ENCODE measurements at regions of chr4 and their contacts with region 1.

Region 1: DNA sequence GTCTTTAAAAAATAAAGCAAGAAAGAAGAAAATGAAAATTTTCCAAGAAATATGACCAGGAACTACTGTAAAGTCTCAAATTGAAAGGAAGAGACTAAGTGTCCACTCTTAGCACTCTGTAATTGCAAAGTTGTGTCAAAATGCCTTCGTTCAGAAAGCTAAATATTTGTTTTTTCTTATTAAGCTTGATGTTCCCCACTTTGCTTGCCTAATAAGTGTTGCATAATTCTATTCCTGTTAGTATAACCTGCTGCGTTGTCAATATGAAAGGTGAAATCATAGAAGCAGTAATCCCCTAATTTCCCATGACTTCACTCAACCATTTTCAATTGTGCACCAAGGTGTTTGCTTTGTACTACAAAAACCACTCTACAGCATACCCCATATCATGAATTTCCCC is 442.9 kb upstream of the CTSO start:
- DNase-seq: no peak
- H3K4me3 ChIP-seq: no peak overlapping the region
- H3K27ac ChIP-seq: no peak overlapping the region
- H3K4me1 ChIP-seq: no peaks in the 10 kb centered on the region
- H3K27me3 ChIP-seq: no peaks in the 10 kb centered on the region
- CTCF ChIP-seq: no peak

Region 2: GRCh38 chr4:156344397-156344796 is 52.1 kb before region 1 on chr4:
- intact Hi-C with region 1: loop called (anchors 5 kb)
- DNase-seq: no peak
- H3K4me3 ChIP-seq: no peak overlapping the region
- H3K27ac ChIP-seq: no peak overlapping the region
- H3K4me1 ChIP-seq: peaks cover 0 to 3% of the 10 kb centered on the region in 2 donors
- H3K27me3 ChIP-seq: no peaks in the 10 kb centered on the region
- CTCF ChIP-seq: no peak

Region 3: DNA sequence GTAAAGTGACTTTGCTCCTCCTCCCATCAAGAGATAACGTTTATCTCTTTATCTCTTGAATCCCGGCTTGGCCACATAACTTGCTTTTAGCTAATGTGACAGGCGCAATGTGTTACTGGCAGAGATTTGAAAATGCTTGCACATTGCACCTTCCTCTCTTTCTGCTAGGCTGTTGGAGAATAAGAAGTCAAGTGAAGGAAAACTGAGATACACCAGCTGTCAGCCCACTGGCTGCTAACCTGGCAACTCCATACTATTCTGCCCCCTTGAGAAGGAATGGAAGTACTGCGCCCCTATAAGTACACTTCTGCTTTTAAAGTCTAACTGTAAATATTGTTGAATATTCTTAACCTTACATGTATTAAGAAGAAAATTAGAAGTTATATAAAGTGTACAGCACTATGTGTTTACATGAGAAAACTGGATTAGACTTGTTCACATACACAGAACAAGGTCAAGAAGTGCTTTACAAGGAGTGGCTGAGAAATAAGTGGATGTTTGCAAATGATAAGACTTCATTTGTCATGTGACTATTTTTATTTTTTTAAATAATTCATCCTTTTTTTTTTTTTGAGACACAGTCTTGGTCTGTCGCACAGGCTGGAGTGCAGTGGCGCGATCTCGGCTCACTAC is 18.4 kb before region 1 on chr4:
- intact Hi-C with region 1: no loop called
- DNase-seq: no peak
- H3K4me3 ChIP-seq: no peak overlapping the region
- H3K27ac ChIP-seq: no peak overlapping the region
- H3K4me1 ChIP-seq: no peaks in the 10 kb centered on the region
- H3K27me3 ChIP-seq: no peaks in the 10 kb centered on the region
- CTCF ChIP-seq: peak in 1 of 3 experiments; percentile 24